ENCODE measurements at regions of chr12 and their contacts with region 1.

Region 1: DNA sequence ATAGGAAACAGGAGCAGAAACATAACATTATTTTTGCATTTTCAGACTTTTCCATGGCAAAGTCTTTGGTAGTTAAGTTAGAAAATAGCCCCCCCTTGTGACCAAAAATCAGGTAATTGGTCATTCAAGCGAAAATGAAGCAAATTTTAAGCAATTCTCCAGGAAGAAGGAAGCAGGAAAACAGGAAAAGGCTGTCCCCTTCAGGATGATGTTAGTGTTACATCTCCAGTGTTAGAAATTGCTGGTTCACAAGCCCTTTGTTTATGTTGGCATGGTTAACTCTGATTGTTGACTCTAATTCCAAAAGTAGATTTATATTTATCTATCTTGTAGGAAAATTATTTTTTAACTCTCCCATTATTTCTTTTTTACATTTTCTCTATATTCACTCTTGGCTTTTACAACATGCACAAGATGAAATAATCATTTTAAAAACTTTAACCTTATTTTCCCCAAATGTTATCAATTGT is 18.8 kb upstream of the GAS2L3 start:
- DNase-seq: peak; percentile 90
- ATAC-seq: peak; percentile 90
- H3K4me3 ChIP-seq: no peak overlapping the region
- H3K27ac ChIP-seq: no peak overlapping the region
- H3K4me1 ChIP-seq: 0 out of 2 replicates have a peak, but pooled peaks cover 2% of the 10 kb centered on the region
- H3K27me3 ChIP-seq: no peaks in the 10 kb centered on the region
- CTCF ChIP-seq: peak; percentile 99; the same call in 1 of the 2 replicates
- POLR2A ChIP-seq: no peak
- RAD21 ChIP-seq: peak; percentile 85

Region 2: DNA sequence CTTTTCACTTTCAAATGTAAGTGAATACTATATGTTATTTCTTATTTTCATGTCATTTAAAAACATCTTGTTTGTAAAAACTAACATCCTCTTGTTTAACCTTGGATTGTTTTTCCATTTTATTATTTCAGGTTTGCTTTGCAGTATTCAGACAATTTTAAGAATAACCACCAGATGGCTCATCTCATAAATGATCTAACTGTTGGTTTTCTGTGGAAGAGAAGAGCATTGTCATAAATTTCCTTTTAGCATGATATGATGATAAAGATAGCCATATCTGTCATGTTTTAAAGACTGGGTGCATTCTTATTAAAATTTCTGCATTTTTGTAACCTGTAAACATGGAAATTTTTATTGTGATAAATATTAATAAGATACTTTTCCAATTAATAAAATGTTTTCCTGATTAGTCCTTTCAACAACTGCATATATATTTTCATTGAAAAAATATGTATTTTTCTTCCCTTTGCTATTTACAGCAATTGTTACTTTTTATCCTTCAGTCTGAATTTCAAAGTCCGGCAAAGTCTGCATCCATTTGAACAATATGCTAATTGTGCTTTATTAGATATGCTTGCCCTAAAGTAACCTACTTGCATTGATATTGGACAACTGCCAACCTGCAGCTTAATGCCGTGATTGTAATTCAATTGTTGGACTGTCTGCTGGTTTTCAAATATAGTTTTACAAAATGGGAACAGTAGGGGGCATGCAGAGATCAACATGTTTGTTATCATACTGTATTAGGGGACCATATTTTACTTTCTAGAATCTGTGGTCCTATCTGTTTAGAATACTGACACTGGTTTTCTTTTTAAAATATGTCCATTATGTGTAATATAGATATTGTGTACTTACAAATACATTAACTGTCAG is 743.7 kb before region 1 on chr12:
- CTCF ChIA-PET with region 1: no interaction called
- POLR2A ChIA-PET with region 1: no interaction called
- dilution Hi-C with region 1: no loop called
- in situ Hi-C with region 1: no loop called
- intact Hi-C with region 1: loop called (anchors 2 kb)
- DNase-seq: peak; percentile 18
- ATAC-seq: no peak
- H3K4me3 ChIP-seq: no peak overlapping the region
- H3K27ac ChIP-seq: no peak overlapping the region
- H3K4me1 ChIP-seq: no peaks in the 10 kb centered on the region
- H3K27me3 ChIP-seq: no peaks in the 10 kb centered on the region
- CTCF ChIP-seq: peak; percentile 33
- POLR2A ChIP-seq: no peak
- RAD21 ChIP-seq: peak; percentile 33; the same call in 1 of the 2 replicates

Region 3: GRCh38 chr12:100154474-100155247 is 400.0 kb before region 1 on chr12:
- CTCF ChIA-PET with region 1: interaction called, 4 read pairs
- POLR2A ChIA-PET with region 1: no interaction called
- dilution Hi-C with region 1: no loop called
- in situ Hi-C with region 1: no loop called
- intact Hi-C with region 1: loop called (anchors 2 kb)
- DNase-seq: peak; percentile 48
- ATAC-seq: peak; percentile 94
- H3K4me3 ChIP-seq: no peak overlapping the region
- H3K27ac ChIP-seq: no peak overlapping the region
- H3K4me1 ChIP-seq: no peaks in the 10 kb centered on the region
- H3K27me3 ChIP-seq: peaks cover 6% of the 10 kb centered on the region; the same call in 1 of the 2 replicates
- CTCF ChIP-seq: peak; percentile 65
- POLR2A ChIP-seq: no peak
- RAD21 ChIP-seq: peak; percentile 55

Region 4: GRCh38 chr12:100243137-100243536 is 311.5 kb before region 1 on chr12:
- CTCF ChIA-PET with region 1: no interaction called
- POLR2A ChIA-PET with region 1: no interaction called
- dilution Hi-C with region 1: no loop called
- in situ Hi-C with region 1: loop called (anchors 5 kb)
- intact Hi-C with region 1: no loop called
- DNase-seq: no peak
- ATAC-seq: no peak
- H3K4me3 ChIP-seq: no peak overlapping the region
- H3K27ac ChIP-seq: no peak overlapping the region
- H3K4me1 ChIP-seq: no peaks in the 10 kb centered on the region
- H3K27me3 ChIP-seq: no peaks in the 10 kb centered on the region
- CTCF ChIP-seq: no peak
- POLR2A ChIP-seq: no peak
- RAD21 ChIP-seq: no peak

Region 5: GRCh38 chr12:100733817-100734593 is 179.4 kb after region 1 on chr12:
- CTCF ChIA-PET with region 1: no interaction called
- POLR2A ChIA-PET with region 1: no interaction called
- dilution Hi-C with region 1: no loop called
- in situ Hi-C with region 1: no loop called
- intact Hi-C with region 1: loop called (anchors 5 kb)
- DNase-seq: peak; percentile 60
- ATAC-seq: peak; percentile 81
- H3K4me3 ChIP-seq: no peak overlapping the region
- H3K27ac ChIP-seq: no peak overlapping the region
- H3K4me1 ChIP-seq: no peaks in the 10 kb centered on the region
- H3K27me3 ChIP-seq: no peaks in the 10 kb centered on the region; the same call in 1 of the 2 replicates
- CTCF ChIP-seq: peak; percentile 67
- POLR2A ChIP-seq: no peak
- RAD21 ChIP-seq: peak; percentile 59

Measured in IMR-90 (cell line).